Lower leg skin (tissue), 4 donors: ENCODE measurements at regions of chr12 and their contacts with region 1.

Region 1: GRCh38 chr12:119758722-119759121 is 90.8 kb downstream of the PRKAB1 start:
- DNase-seq: no peak
- H3K4me3 ChIP-seq: no peak overlapping the region
- CTCF ChIP-seq: no peak
- POLR2A ChIP-seq: no peak

Region 2: DNA sequence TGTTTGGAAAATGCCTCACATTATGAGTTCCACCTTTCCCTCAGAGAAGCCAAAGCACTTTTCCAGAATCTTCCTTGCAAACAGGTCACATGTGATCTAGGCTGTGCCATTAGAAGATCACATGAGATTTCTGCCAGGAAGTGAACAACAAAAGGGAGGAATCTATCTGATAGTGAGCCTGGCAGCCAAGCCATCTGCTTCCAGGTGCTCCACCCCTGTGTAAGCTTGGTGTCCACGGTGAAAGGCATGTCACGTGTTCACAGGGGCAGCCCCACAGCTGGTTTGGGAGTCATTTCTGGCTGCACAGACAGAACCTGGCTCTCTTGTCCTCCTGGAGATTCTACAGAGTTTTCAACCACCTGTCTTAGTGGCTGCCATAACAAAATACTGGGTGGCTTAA is 1786.4 kb before region 1 on chr12:
- intact Hi-C with region 1: loop called (anchors 5 kb)
- DNase-seq: no peak
- H3K4me3 ChIP-seq: no peak overlapping the region
- CTCF ChIP-seq: no peak
- POLR2A ChIP-seq: no peak

Region 3: DNA sequence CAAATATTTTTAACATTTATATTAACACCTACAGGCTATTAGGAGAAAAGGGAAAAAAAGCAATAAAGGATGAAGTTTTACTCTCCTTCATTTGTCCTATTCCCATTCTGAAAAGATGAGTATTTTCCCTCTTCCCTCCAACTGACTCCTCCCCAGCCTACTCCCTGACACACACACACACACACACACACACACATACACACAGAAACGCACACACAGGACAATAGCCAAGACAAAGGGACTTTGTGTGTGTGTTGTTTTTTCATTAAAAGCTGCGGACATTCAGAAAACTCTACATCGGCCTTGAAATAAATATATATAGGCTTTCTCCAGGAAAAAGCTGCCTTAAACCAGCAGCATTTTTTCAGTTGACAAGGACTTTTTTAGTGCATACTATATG is 16.0 kb before region 1 on chr12:
- intact Hi-C with region 1: no loop called
- DNase-seq: no peak
- H3K4me3 ChIP-seq: no peak overlapping the region
- CTCF ChIP-seq: no peak
- POLR2A ChIP-seq: no peak